Activated B cell treated with CpG ODN at 0.5 μM for 24 hours (primary cell): ENCODE measurements at regions of chr11 and their contacts with region 1.

Region 1: GRCh38 chr11:9757809-9758636 is 94.1 kb downstream of the SWAP70 start:
- DNase-seq: peak; percentile 96
- ATAC-seq: peak; percentile 59
- H3K4me3 Mint-ChIP-seq: peak overlapping the region; percentile 87
- H3K27ac Mint-ChIP-seq: peak overlapping the region; percentile 98
- H3K4me1 Mint-ChIP-seq: peaks cover 81% of the 10 kb centered on the region
- H3K27me3 Mint-ChIP-seq: no peaks in the 10 kb centered on the region
- CTCF ChIP-seq: peak; percentile 47

Region 2: GRCh38 chr11:8688414-8689362 is 1069.3 kb before region 1 on chr11:
- CTCF ChIA-PET with region 1: no interaction called
- POLR2A ChIA-PET with region 1: no interaction called
- intact Hi-C with region 1: loop called (anchors 10 kb)
- DNase-seq: peak; percentile 84
- ATAC-seq: peak; percentile 90
- H3K4me3 Mint-ChIP-seq: peak overlapping the region; percentile 97
- H3K27ac Mint-ChIP-seq: peak overlapping the region; percentile 95
- H3K4me1 Mint-ChIP-seq: peaks cover 49% of the 10 kb centered on the region
- H3K27me3 Mint-ChIP-seq: no peaks in the 10 kb centered on the region
- CTCF ChIP-seq: no peak

Region 3: DNA sequence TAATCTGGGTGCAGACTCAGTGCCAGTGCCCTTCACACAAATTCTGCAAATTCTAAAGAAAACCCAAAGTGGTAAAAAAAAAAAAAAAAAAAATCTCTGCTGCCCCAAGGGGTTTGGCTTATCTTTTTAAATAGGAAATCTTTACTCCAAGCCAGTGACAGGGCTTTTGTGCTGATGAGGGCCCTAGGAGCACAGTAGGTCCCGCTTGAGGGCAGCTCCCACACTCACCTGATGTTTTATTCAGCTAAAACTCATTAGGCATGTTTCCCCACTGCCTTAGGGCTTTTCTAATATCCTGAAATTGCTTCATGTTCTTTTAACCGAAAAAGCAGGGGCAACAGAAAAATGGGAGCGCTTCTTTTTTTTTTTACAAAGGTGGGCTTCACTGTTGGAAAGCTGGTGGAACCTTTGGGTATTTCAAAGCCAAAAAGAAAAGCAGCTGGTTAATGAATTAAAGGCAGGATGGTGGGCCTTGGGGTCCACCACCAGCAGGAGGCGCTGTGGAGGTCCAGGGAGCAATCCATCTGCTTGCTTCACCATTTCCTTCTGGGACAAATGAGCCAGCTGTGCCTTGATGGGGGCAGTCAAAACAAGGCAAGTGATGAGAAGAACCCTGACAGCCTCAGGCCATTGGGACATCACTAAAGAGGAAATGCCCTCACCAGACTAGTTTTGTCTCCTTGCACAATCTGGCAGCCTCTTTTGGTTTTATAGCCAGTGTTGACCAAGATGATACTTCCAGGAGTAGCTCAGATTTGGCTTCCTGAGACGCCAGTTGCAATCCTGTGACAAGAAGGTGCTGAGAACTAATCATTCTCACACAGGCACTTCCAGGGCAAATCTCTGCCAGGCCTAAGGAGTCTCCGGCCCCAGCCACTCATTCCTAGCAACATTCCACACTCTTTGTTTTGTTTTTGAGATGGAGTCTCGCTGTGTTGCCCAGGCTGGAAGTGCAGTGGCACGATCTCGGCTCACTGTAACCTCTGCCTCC is 222.9 kb before region 1 on chr11:
- CTCF ChIA-PET with region 1: interaction called, 13 read pairs
- POLR2A ChIA-PET with region 1: interaction called, 3 read pairs
- intact Hi-C with region 1: no loop called
- DNase-seq: peak; percentile 71
- ATAC-seq: peak; percentile 71
- H3K4me3 Mint-ChIP-seq: no peak overlapping the region
- H3K27ac Mint-ChIP-seq: no peak overlapping the region
- H3K4me1 Mint-ChIP-seq: peaks cover 5% of the 10 kb centered on the region
- H3K27me3 Mint-ChIP-seq: no peaks in the 10 kb centered on the region
- CTCF ChIP-seq: no peak

Region 4: DNA sequence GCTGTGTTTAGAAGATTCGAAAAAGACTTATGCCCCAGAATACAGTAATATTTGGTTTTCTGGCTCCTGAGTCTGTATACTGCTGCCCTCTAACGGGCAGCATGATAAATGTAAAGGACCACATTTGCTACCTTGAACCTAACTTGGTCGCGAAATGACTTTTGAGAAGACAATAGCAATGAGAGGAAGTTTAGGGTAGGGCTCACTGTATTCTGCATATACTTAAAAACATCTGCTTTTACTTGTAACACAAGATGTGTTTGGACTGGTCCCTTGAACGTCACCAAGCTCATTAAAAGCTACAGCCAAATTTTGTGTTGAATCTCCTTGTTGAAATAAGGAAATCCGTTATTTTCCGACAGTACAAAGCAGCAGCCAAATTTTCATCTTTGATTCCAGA is 215.0 kb after region 1 on chr11:
- CTCF ChIA-PET with region 1: interaction called, 76 read pairs
- POLR2A ChIA-PET with region 1: interaction called, 18 read pairs
- intact Hi-C with region 1: loop called (anchors 1 kb)
- DNase-seq: no peak
- ATAC-seq: peak; percentile 66
- H3K4me3 Mint-ChIP-seq: no peak overlapping the region
- H3K27ac Mint-ChIP-seq: no peak overlapping the region
- H3K4me1 Mint-ChIP-seq: peaks cover 6% of the 10 kb centered on the region
- H3K27me3 Mint-ChIP-seq: no peaks in the 10 kb centered on the region
- CTCF ChIP-seq: no peak

Region 5: DNA sequence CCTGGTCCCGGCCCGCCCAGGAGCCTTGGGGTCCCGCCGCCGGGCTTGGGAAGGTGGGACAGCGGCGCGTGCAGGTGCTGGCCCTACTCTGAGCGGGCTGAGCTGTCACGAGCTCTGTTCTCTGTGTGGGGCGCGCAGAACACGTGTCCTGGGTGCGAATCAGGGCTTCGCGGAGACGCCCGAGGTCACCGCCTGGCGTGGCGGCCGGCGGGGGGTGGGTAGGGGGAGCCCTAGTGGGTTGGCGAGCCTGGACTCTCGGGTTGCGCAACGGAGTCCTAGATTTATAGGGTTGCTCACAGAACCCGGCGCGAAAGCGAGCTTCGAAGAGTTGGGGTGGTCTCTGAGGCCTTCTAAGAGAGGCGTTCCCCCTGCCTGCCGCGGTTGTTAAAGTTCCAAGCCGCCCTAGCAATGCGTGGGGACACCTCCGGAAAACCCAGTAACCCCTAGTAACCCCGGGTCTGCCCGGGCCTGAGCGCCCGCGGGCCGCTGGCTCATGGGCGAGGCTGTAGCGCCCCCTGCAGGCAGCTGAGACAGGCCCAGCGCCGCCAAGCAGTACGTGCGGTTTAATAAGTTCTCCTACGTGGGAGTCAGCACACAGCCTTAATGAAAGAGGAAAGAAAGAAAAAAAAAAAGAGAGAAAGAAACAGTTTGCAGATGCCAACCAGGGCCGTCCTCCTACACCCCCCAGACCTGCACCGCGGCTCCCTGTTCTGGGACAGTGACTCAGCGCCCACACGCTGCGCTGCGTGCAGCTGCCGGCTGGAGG is 549.6 kb after region 1 on chr11:
- CTCF ChIA-PET with region 1: interaction called, 21 read pairs
- POLR2A ChIA-PET with region 1: interaction called, 29 read pairs
- intact Hi-C with region 1: loop called (anchors 1 kb)
- DNase-seq: peak; percentile 75
- ATAC-seq: peak; percentile 76
- H3K4me3 Mint-ChIP-seq: peak overlapping the region; percentile 97
- H3K27ac Mint-ChIP-seq: peak overlapping the region; percentile 67
- H3K4me1 Mint-ChIP-seq: peaks cover 44% of the 10 kb centered on the region
- H3K27me3 Mint-ChIP-seq: peaks cover 8% of the 10 kb centered on the region
- CTCF ChIP-seq: peak; percentile 95

Region 6: DNA sequence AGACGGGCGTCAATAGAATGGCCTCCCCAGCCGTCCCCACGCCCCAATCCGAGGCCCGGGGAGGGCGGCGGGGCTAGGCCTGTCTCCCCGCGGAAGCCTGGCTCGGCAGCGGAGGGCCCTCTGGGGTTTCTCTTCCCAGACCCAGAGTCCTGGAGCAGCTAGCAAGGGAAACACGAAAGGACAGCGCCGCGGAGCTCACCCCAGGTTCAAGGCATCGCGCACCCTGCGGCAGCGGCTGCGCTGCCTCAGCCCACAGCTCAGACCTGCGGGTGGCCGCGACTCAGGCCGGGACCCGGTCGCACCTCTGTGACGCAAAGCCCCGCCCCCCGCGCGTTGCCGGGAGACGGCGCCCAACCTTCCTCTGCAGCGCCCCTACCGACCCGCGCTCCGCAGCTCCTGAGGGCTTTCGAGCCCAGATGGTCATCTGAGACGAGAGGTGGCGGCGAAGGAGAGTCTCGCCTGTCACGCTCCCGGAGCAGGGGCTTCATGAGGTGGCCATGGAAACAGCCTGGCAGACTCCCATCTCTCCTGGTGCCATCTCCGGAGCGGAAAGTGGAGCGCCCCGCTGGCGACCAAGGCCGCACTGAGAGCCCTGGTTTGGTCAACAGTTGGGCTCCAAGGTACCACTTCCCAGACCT is 783.0 kb after region 1 on chr11 and contains the start of gene RNF141:
- CTCF ChIA-PET with region 1: no interaction called
- POLR2A ChIA-PET with region 1: no interaction called
- intact Hi-C with region 1: loop called (anchors 5 kb)
- DNase-seq: peak; percentile 99
- ATAC-seq: peak; percentile 91
- H3K4me3 Mint-ChIP-seq: peak within 1 kb of the TSS; percentile 90
- H3K27ac Mint-ChIP-seq: peak within 1 kb of the TSS; percentile 95
- H3K4me1 Mint-ChIP-seq: peaks cover 80% of the 10 kb centered on the region
- H3K27me3 Mint-ChIP-seq: no peaks in the 10 kb centered on the region
- CTCF ChIP-seq: no peak
- total RNA-seq, gene RNF141: 32.8 and 36.9 TPM in 2 replicates